ENCODE measurements at regions of chr15 and their contacts with region 1.

Region 1: GRCh38 chr15:44663409-44664308 is at the start of gene SPG11:
- DNase-seq: peak; percentile 99
- ATAC-seq: peak; percentile 96
- H3K4me3 ChIP-seq: peak within 1 kb of the TSS; percentile 94
- H3K4me1 ChIP-seq: peaks cover 12% of the 10 kb centered on the region
- CTCF ChIP-seq: peak; percentile 90
- total RNA-seq, gene SPG11: 89.9 to 135 (median 90.6) TPM

Region 2: DNA sequence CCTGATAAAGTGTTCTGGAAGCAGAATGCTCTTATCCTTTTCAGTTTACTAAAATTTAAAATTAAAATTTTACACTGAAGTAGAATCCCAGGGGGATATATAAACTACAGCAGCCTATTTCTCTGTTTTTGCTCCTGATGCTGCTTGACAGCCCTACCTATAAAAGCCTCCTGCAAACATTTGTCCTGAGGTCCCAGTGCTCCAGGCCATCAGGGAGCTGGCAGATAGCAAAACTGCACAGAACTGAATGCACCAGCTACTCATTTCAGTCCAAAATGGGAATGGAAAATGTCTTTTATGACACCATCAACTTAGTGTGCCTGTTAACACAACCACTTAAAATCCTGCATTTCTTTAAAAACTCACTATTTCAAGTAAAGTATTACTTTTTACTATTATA is 518.7 kb before region 1 on chr15:
- intact Hi-C with region 1: no loop called
- DNase-seq: no peak
- ATAC-seq: no peak
- H3K4me3 ChIP-seq: no peak overlapping the region
- H3K4me1 ChIP-seq: no peaks in the 10 kb centered on the region
- CTCF ChIP-seq: no peak

Region 3: GRCh38 chr15:44728576-44729407 is 65.1 kb after region 1 on chr15:
- intact Hi-C with region 1: loop called (anchors 5 to 10 kb)
- DNase-seq: peak; percentile 96 to 97 (median 97)
- ATAC-seq: peak; percentile 90
- H3K4me3 ChIP-seq: peak overlapping the region; percentile 63
- H3K4me1 ChIP-seq: peaks cover 52% of the 10 kb centered on the region
- CTCF ChIP-seq: peak; percentile 10

Region 4: DNA sequence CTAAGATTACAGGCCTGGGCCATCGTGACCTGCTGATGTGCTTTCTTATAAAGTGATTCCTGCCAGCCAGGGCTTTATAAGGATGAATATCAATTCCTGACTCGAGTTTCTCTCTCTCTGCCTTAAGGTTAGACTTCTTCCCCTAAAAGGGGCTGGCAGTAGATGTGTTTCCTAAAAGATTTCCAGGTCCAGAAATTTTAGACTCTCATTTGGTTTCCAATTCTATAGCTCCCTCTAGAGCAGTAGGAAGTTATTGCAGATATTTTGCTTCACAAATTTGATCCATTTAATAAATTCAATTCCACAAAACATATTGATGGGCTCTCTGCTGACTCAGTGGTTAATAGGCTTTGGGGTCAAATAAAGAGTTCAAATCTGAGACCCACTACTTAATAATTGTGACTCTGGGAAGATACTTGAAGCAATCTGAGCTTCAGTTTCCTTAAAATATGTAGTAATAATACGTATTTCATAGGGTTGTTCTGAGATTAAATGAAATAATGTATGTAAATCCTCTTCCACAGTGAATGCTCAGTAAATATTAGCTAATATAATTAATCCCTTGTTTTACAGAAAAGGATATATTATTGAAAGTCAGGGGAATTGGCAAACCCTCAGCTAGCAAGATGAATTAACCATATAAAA is 74.8 kb after region 1 on chr15:
- intact Hi-C with region 1: loop called in 1 of 2 experiments (anchors 10 kb)
- DNase-seq: no peak
- ATAC-seq: peak; percentile 66
- H3K4me3 ChIP-seq: no peak overlapping the region
- H3K4me1 ChIP-seq: peaks cover 3% of the 10 kb centered on the region
- CTCF ChIP-seq: no peak

Region 5: DNA sequence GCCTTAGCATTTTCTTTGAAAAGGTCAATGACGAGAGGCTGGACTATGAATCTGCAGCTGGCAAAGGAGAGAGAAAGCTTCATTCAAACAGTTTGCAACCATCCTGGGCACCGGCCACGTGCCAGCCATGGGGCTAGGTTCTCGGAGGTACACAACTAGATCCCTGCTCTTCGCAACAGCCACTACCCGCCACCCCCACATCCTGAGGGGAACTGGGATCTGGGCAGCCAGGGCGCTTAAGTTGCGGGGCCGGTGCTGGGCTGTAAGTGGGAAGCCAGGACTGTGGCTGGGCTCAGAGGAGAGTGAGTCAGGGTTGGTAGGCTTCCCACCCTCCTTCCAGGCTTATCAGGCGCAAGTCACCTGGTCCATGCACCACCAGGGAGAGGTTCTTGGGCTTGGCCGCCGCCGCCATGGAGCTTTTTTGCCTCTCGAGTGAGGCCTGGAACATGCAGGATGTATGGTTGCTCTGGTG is 197.8 kb after region 1 on chr15:
- intact Hi-C with region 1: no loop called
- DNase-seq: no peak
- ATAC-seq: no peak
- H3K4me3 ChIP-seq: no peak overlapping the region
- H3K4me1 ChIP-seq: no peaks in the 10 kb centered on the region
- CTCF ChIP-seq: no peak

Measured in mucosa of descending colon (tissue), 3 donors.